Dendritic cell treated with granulocyte-macrophage colony-stimulating factor and Interleukin-4, amounts not matched to agents 40 ng/mL and 50 ng/mL, for 4 days (primary cell): ENCODE measurements at regions of chr1 and their contacts with region 1.

Region 1: DNA sequence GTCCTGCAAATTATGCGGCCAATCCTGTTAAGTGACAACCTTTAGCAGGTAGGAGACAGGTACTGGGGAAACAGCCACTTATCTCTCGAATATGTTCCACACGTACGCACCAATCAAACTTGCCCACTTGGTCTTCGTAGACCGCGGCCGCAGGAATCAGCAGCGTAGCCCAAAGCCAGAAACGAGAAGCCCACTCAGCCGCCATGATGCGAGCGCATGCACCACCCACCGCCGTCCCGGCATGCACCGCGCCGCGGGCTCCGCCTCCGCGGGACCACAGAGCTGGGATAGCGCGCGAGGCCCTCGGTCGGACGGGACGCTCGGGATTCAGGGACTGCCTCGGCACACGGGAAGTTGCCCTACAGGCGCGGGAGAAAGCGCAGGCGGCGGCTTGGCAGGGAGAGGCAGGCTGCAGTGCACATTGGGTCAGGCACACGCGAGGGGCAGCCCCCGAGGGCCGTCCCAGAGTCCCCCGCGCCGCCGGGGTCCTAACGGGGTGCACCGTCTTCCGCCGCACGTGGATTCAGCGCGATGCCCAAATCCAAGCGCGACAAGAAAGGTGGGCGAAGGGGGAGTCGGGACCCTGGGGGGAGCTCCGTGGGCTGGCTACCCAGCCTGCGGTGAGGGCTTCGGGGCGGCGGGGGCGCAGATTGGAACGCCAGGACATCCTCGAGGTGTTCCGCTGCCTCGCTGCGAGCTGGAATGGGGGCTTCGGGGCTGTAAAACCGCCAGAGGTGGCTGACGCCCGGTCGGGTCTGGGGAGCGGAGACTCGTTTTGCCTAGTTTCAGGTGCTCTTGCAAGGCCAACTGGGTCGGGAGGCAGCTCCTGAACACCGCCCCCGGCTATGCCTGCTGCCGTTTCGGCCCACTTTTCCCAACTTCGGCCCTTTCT is at the starts of genes EMC1 and MRTO4:
- H3K4me3 Mint-ChIP-seq: peak within 1 kb of the TSS; percentile 89
- H3K27ac Mint-ChIP-seq: peak within 1 kb of the TSS; percentile 99
- H3K4me1 Mint-ChIP-seq: peaks cover 35% of the 10 kb centered on the region
- H3K27me3 Mint-ChIP-seq: no peaks in the 10 kb centered on the region

Region 2: GRCh38 chr1:19209990-19210771 is 41.4 kb before region 1 on chr1 and contains the start of gene UBR4:
- intact Hi-C with region 1: loop called (anchors 5 kb)
- H3K4me3 Mint-ChIP-seq: peak within 1 kb of the TSS; percentile 84
- H3K27ac Mint-ChIP-seq: peak within 1 kb of the TSS; percentile 93
- H3K4me1 Mint-ChIP-seq: peaks cover 53% of the 10 kb centered on the region
- H3K27me3 Mint-ChIP-seq: no peaks in the 10 kb centered on the region

Region 3: GRCh38 chr1:19311959-19312781 is 60.6 kb after region 1 on chr1 and contains the starts of genes AKR7A2 and SLC66A1:
- intact Hi-C with region 1: loop called (anchors 2 kb)
- H3K4me3 Mint-ChIP-seq: peak within 1 kb of the TSS; percentile 87
- H3K27ac Mint-ChIP-seq: peak within 1 kb of the TSS; percentile 75
- H3K4me1 Mint-ChIP-seq: peaks cover 62% of the 10 kb centered on the region
- H3K27me3 Mint-ChIP-seq: no peaks in the 10 kb centered on the region